ENCODE measurements at regions of chr9 and their contacts with region 1.

Region 1: DNA sequence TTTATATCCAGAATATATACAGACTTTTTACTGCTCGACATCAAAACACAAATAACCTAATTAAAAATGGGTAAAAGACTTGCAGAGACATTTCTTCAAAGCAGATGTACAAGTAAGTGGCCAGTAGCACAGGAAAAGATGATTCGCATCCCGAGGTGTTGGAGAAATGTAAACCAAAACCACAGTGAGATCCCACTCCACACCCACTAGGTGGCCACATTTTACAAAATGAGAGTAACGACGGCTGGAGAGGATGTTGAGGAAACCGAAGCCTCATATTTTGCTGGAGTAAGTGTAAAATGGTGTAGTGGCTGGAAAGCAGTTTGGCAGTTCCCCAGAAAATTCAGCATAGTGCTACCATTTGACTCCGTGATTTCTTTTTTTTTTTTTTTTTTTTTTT is 21.2 kb upstream of the GBGT1 start:
- DNase-seq: peak; percentile 62
- H3K4me3 Mint-ChIP-seq: no peak overlapping the region
- H3K27ac Mint-ChIP-seq: no peak overlapping the region
- H3K4me1 Mint-ChIP-seq: peaks cover 27% of the 10 kb centered on the region
- H3K27me3 Mint-ChIP-seq: peaks cover 48% of the 10 kb centered on the region

Region 2: DNA sequence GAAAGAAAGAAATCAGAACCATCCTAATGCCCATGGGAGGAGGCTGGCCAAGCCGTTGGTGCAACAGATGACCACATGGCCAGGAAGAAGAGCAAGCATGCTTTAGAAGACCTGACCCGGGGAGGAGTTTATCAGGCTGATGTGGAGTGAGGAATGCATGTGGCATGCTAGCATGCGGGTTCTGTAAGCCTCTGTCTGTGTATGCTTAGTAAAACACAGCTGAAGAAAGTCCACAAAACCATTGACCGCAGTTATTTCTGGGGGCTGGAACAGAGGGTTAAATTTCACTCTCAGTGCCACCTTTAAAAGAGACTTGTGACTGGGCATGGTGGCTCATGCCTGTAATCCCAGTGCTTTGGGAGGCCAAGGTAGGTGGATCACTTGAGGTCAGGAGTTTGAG is 187.4 kb before region 1 on chr9:
- CTCF ChIA-PET with region 1: no interaction called
- POLR2A ChIA-PET with region 1: no interaction called
- DNase-seq: no peak
- H3K4me3 Mint-ChIP-seq: no peak overlapping the region
- H3K27ac Mint-ChIP-seq: no peak overlapping the region
- H3K4me1 Mint-ChIP-seq: peaks cover 3% of the 10 kb centered on the region
- H3K27me3 Mint-ChIP-seq: peaks cover 21% of the 10 kb centered on the region

Region 3: DNA sequence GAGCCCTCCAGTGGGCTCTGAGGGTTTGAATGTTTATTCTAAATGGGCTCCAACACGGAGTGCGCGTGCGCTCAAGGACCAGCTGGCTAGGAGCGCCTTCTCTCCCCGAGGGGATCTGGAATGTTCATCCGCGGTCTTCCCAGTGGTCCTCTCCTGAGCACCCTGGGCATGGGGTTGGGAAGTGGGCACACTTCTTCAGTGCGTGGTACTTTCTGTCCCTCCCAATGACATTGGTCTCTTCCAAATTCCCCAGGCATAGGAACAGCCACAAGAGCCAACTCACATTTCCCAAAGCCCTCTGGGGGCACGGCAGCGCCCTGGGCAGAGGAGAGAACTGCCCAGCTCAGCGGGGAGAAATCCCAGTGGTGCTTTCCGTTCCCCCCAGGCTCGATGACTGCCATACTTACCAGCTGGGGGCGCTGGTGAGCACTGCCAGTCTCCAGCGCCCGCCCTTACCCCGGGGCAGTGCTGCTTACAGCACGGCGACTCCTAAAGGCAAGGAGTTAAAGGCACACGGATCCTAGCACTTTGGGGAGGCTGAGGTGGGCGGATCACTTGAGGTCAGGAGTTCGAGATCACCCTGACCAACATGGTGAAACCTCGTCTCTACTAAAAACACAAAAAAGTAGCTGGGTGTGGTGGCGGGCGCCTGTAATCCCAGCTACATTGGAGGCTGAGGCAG is 54.0 kb after region 1 on chr9:
- CTCF ChIA-PET with region 1: interaction called, 12 read pairs
- POLR2A ChIA-PET with region 1: no interaction called
- DNase-seq: peak; percentile 70
- H3K4me3 Mint-ChIP-seq: no peak overlapping the region
- H3K27ac Mint-ChIP-seq: no peak overlapping the region
- H3K4me1 Mint-ChIP-seq: peaks cover 5% of the 10 kb centered on the region
- H3K27me3 Mint-ChIP-seq: peaks cover 10% of the 10 kb centered on the region

Region 4: DNA sequence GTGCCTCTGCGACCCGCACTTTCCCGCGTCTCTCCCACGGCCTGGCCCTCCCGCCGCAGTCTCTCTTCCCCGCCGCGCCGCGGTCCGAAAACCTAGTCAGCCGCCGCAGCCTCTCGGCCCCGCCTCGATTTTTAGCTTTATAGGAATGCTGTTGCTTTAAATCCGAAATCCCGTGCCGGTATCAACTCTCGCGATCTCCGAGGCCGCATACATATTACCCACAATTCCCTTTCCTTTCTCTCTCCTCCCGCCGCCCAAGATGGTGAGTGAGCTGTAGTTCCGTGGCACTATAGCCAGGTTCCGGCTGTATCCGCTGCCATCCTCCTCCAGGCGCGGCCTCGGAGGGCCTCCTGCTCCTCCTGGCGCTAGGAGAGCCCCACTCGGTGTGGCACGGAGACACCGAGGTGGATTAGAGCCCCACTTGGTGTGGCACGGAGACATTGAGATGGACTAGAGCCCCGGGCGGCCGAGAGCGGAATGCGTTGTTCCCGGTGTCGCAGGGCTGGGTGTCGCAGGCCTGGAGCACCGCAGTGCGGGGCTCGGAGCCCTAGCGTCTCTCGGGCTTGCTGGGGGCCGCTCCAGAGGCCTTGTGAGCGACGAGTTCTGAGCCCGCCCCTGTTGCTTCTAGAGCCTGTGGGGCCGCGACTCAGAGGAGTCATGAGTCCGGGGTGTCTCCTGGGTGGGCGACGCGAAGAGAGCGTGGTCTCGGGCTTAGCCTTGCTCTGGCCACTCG is 163.2 kb after region 1 on chr9 and contains the starts of genes MED22 and RPL7A:
- CTCF ChIA-PET with region 1: interaction called, 11 read pairs
- POLR2A ChIA-PET with region 1: no interaction called
- DNase-seq: peak; percentile 95
- H3K4me3 Mint-ChIP-seq: peak within 1 kb of the TSS; percentile 95
- H3K27ac Mint-ChIP-seq: peak within 1 kb of the TSS; percentile 86
- H3K4me1 Mint-ChIP-seq: peaks cover 54% of the 10 kb centered on the region
- H3K27me3 Mint-ChIP-seq: no peaks in the 10 kb centered on the region
- total RNA-seq, gene MED22: 21.1 to 23.3 TPM
- total RNA-seq, gene RPL7A: 1,627 to 1,632 TPM

Region 5: DNA sequence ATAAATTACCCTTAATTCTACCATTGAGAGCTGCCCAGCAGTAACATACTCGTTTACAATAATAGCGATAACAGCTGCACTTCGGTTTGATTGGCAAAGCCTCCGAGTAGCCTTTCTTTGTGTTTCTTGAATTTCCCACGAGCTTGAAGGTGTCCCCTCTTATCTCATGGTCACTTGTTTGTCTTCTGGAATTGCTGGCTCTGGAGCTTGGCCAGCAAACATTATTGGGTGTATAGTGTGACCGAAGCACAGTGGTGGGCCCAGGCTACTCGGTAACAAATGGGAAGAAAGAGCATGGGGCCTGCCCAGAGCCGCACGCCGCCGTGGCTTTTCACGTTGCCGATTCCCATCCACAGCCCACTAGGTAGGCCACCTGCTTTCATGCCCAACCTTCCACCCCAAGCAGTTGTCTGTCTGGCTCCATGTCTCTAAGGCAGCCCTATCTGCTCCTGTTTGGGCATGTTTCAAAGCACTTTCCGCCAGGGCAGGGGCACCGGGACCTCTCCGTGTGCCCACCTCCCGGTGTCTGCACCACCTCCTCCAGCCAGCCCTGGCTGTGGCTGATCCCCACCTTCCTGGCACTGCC is 199.9 kb after region 1 on chr9:
- CTCF ChIA-PET with region 1: no interaction called
- POLR2A ChIA-PET with region 1: no interaction called
- DNase-seq: no peak
- H3K4me3 Mint-ChIP-seq: no peak overlapping the region
- H3K27ac Mint-ChIP-seq: no peak overlapping the region
- H3K4me1 Mint-ChIP-seq: no peaks in the 10 kb centered on the region
- H3K27me3 Mint-ChIP-seq: no peaks in the 10 kb centered on the region

Region 6: GRCh38 chr9:133403766-133404439 is 218.9 kb after region 1 on chr9:
- CTCF ChIA-PET with region 1: interaction called, 10 read pairs
- POLR2A ChIA-PET with region 1: interaction called, 3 read pairs
- DNase-seq: peak; percentile 67
- H3K4me3 Mint-ChIP-seq: no peak overlapping the region
- H3K27ac Mint-ChIP-seq: no peak overlapping the region
- H3K4me1 Mint-ChIP-seq: peaks cover 12% of the 10 kb centered on the region
- H3K27me3 Mint-ChIP-seq: no peaks in the 10 kb centered on the region